ENCODE measurements at regions of chr6 and their contacts with region 1.

Region 1: GRCh38 chr6:26312501-26313390 is 52.3 kb upstream of the BTN3A2 start:
- DNase-seq: peak; percentile 89
- H3K4me3 Mint-ChIP-seq: peak overlapping the region; percentile 85
- H3K27ac Mint-ChIP-seq: peak overlapping the region; percentile 82
- H3K4me1 Mint-ChIP-seq: peaks cover 42% of the 10 kb centered on the region
- H3K27me3 Mint-ChIP-seq: peaks cover 7% of the 10 kb centered on the region

Region 2: DNA sequence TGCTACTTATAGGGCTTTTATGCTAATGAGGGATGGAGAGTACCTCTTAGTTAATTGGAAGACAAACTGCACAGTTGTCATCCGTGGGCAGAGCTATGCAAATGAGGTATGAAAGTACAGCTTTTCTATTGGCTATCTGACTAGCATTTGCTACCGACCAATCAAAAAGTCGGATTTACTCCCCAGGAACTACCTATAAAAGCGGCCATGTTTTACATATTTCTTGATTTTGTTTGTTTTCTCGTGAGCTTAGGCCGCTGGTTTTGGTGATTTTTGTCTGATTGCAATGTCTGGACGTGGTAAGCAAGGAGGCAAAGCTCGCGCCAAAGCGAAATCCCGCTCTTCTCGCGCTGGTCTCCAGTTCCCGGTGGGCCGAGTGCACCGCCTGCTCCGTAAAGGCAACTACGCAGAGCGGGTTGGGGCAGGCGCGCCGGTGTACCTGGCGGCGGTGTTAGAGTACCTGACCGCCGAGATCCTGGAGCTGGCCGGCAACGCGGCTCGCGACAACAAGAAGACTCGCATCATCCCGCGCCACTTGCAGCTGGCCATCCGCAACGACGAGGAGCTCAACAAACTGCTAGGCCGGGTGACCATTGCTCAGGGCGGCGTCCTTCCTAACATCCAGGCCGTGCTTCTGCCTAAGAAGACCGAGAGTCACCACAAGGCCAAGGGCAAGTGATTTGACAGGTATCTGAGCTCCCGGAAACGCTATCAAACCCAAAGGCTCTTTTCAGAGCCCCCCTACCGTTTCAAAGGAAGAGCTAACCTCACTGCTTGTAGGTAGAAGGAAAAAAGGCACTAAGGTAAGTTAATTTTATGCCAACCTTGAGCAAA is 188.6 kb before region 1 on chr6:
- CTCF ChIA-PET with region 1: no interaction called
- POLR2A ChIA-PET with region 1: no interaction called
- intact Hi-C with region 1: no loop called
- DNase-seq: peak; percentile 81
- H3K4me3 Mint-ChIP-seq: peak overlapping the region; percentile 95
- H3K27ac Mint-ChIP-seq: peak overlapping the region; percentile 100
- H3K4me1 Mint-ChIP-seq: peaks cover 40% of the 10 kb centered on the region
- H3K27me3 Mint-ChIP-seq: peaks cover 8% of the 10 kb centered on the region

Region 3: GRCh38 chr6:26249957-26250697 is 62.6 kb before region 1 on chr6:
- CTCF ChIA-PET with region 1: no interaction called
- POLR2A ChIA-PET with region 1: interaction called, 9 read pairs
- intact Hi-C with region 1: loop called (anchors 2 kb)
- DNase-seq: peak; percentile 84
- H3K4me3 Mint-ChIP-seq: peak overlapping the region; percentile 82
- H3K27ac Mint-ChIP-seq: peak overlapping the region; percentile 99
- H3K4me1 Mint-ChIP-seq: peaks cover 22% of the 10 kb centered on the region
- H3K27me3 Mint-ChIP-seq: no peaks in the 10 kb centered on the region

Region 4: GRCh38 chr6:26301638-26302037 is 11.1 kb before region 1 on chr6:
- CTCF ChIA-PET with region 1: no interaction called
- POLR2A ChIA-PET with region 1: interaction called, 3 read pairs
- intact Hi-C with region 1: loop called (anchors 1 kb)
- DNase-seq: no peak
- H3K4me3 Mint-ChIP-seq: no peak overlapping the region
- H3K27ac Mint-ChIP-seq: no peak overlapping the region
- H3K4me1 Mint-ChIP-seq: peaks cover 30% of the 10 kb centered on the region
- H3K27me3 Mint-ChIP-seq: no peaks in the 10 kb centered on the region

Region 5: DNA sequence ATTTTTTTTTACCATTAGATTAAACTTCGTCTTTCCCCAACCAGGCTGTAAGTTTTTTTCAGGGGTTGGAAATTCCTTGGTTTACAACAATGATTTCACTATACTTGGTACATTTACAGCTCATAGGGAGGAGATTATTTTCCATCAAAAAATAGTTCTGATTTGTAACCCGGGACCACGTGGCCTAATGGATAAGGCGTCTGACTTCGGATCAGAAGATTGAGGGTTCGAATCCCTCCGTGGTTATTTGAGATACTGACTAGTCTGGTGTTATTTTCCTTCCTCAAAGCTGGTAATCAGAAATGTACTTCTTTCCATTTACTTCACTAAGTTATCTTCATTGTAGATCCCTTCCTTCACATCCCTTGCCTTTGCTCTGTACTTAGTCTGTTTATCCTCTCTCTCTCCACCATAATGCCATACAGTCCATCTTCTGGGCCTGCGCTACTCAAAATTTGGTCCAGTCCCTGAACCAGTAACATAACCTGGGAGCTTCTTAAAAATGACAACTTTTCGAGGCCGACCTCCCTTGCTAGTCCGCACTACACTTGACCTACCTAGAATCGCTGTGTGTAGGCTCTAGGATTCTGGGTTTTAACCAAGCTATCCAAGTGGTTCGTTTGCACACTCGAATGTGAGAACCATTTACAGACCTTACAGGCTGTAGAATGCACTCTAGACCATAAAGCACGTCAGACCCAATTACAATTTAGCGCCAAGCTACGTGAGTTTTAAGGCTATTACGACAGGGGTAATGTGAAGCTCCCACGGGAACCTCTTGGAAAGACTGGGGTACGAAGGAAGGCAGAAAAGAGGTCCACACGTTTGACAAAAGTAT is 10.1 kb after region 1 on chr6:
- CTCF ChIA-PET with region 1: interaction called, 14 read pairs
- POLR2A ChIA-PET with region 1: interaction called, 7 read pairs
- intact Hi-C with region 1: loop called (anchors 1 kb)
- DNase-seq: peak; percentile 64
- H3K4me3 Mint-ChIP-seq: peak overlapping the region; percentile 82
- H3K27ac Mint-ChIP-seq: peak overlapping the region; percentile 80
- H3K4me1 Mint-ChIP-seq: peaks cover 21% of the 10 kb centered on the region
- H3K27me3 Mint-ChIP-seq: peaks cover 25% of the 10 kb centered on the region

Region 6: GRCh38 chr6:26329763-26330511 is 17.2 kb after region 1 on chr6:
- CTCF ChIA-PET with region 1: interaction called, 3 read pairs
- POLR2A ChIA-PET with region 1: interaction called, 5 read pairs
- intact Hi-C with region 1: loop called (anchors 2 kb)
- DNase-seq: peak; percentile 77
- H3K4me3 Mint-ChIP-seq: peak overlapping the region; percentile 80
- H3K27ac Mint-ChIP-seq: peak overlapping the region; percentile 84
- H3K4me1 Mint-ChIP-seq: peaks cover 40% of the 10 kb centered on the region
- H3K27me3 Mint-ChIP-seq: peaks cover 43% of the 10 kb centered on the region

Region 7: GRCh38 chr6:26532699-26533531 is 220.2 kb after region 1 on chr6:
- CTCF ChIA-PET with region 1: no interaction called
- POLR2A ChIA-PET with region 1: interaction called, 4 read pairs
- intact Hi-C with region 1: loop called (anchors 2 kb)
- DNase-seq: peak; percentile 95
- H3K4me3 Mint-ChIP-seq: peak overlapping the region; percentile 92
- H3K27ac Mint-ChIP-seq: peak overlapping the region; percentile 92
- H3K4me1 Mint-ChIP-seq: peaks cover 44% of the 10 kb centered on the region
- H3K27me3 Mint-ChIP-seq: peaks cover 2% of the 10 kb centered on the region